CD4-positive, alpha-beta T cell (primary cell): ENCODE measurements at regions of chr18 and their contacts with region 1.

Region 1: GRCh38 chr18:8988261-8988871 is 114.1 kb upstream of the NDUFV2 start:
- DNase-seq: peak; percentile 35 to 78 (median 46)
- ATAC-seq: peak; percentile 70
- H3K4me3 ChIP-seq: no peak overlapping the region
- H3K4me3 Mint-ChIP-seq: no peak overlapping the region
- H3K27ac ChIP-seq: no peak overlapping the region
- H3K27ac Mint-ChIP-seq: no peak overlapping the region
- H3K4me1 ChIP-seq: no peaks in the 10 kb centered on the region
- H3K4me1 Mint-ChIP-seq: no peaks in the 10 kb centered on the region
- H3K27me3 ChIP-seq: no peaks in the 10 kb centered on the region
- H3K27me3 Mint-ChIP-seq: peaks cover 27% of the 10 kb centered on the region
- CTCF ChIP-seq: peak; percentile 84

Region 2: GRCh38 chr18:7403950-7404349 is 1584.4 kb before region 1 on chr18:
- CTCF ChIA-PET with region 1: no interaction called
- POLR2A ChIA-PET with region 1: no interaction called
- intact Hi-C with region 1: no loop called
- DNase-seq: no peak
- ATAC-seq: no peak
- H3K4me3 ChIP-seq: no peak overlapping the region
- H3K4me3 Mint-ChIP-seq: no peak overlapping the region
- H3K27ac ChIP-seq: no peak overlapping the region
- H3K27ac Mint-ChIP-seq: no peak overlapping the region
- H3K4me1 ChIP-seq: no peaks in the 10 kb centered on the region
- H3K4me1 Mint-ChIP-seq: no peaks in the 10 kb centered on the region
- H3K27me3 ChIP-seq: no peaks in the 10 kb centered on the region
- H3K27me3 Mint-ChIP-seq: no peaks in the 10 kb centered on the region
- CTCF ChIP-seq: no peak

Region 3: DNA sequence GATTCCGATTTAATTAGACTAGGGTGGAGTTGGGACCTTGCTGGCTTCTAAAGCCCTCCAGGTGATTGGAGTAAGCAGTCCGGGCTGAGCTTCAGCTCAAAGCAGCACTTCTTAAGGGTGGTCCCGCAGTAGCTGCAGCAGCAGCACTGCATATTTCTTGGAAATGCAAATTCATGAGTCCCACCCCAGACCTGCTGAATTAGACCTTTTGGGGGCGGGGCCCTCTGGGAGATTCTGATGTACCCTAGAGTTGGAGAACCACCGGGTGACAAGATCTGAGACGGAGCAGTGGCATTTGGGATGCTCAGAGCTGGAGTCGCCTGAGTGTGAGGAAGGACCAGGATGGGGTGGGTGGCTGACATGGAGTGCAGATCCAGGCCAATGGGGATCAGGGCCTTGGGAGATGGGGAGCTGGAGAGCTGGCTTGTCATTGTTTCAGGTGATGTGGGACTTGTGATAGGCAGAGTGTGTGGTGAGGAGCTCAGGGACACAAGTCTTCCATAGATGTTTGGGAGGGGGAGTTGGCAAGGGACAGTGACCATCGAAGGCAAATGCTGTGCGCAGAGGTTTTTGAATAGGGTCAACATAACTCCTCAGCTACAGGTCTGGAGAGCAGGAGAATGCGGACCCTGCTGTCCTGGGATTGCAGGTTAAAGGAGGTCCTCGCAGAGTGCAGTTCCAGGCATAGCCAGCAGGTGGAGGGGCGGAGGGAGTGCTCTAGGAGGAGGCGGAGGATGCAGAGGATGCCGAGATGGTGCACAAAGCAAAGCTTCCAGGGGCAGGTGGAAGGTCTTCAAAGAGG is 510.0 kb before region 1 on chr18:
- CTCF ChIA-PET with region 1: no interaction called
- POLR2A ChIA-PET with region 1: no interaction called
- intact Hi-C with region 1: loop called in 1 of 2 experiments (anchors 5 kb)
- DNase-seq: peak; percentile 11 to 60 (median 34)
- ATAC-seq: peak; percentile 43
- H3K4me3 ChIP-seq: no peak overlapping the region
- H3K4me3 Mint-ChIP-seq: no peak overlapping the region
- H3K27ac ChIP-seq: no peak overlapping the region
- H3K27ac Mint-ChIP-seq: no peak overlapping the region
- H3K4me1 ChIP-seq: no peaks in the 10 kb centered on the region
- H3K4me1 Mint-ChIP-seq: no peaks in the 10 kb centered on the region
- H3K27me3 ChIP-seq: peaks cover 0 to 3% of the 10 kb centered on the region in 2 experiments
- H3K27me3 Mint-ChIP-seq: peaks cover 16% of the 10 kb centered on the region
- CTCF ChIP-seq: peak; percentile 44

Region 4: GRCh38 chr18:8654503-8655451 is 333.6 kb before region 1 on chr18:
- CTCF ChIA-PET with region 1: interaction called, 11 read pairs
- POLR2A ChIA-PET with region 1: no interaction called
- intact Hi-C with region 1: loop called (anchors 1 kb)
- DNase-seq: peak in 3 of 14 experiments; percentile 33 to 43 (median 33)
- ATAC-seq: peak; percentile 51
- H3K4me3 ChIP-seq: no peak overlapping the region
- H3K4me3 Mint-ChIP-seq: no peak overlapping the region
- H3K27ac ChIP-seq: no peak overlapping the region
- H3K27ac Mint-ChIP-seq: no peak overlapping the region
- H3K4me1 ChIP-seq: no peaks in the 10 kb centered on the region
- H3K4me1 Mint-ChIP-seq: no peaks in the 10 kb centered on the region
- H3K27me3 ChIP-seq: no peaks in the 10 kb centered on the region
- H3K27me3 Mint-ChIP-seq: peaks cover 20% of the 10 kb centered on the region
- CTCF ChIP-seq: peak; percentile 94

Region 5: DNA sequence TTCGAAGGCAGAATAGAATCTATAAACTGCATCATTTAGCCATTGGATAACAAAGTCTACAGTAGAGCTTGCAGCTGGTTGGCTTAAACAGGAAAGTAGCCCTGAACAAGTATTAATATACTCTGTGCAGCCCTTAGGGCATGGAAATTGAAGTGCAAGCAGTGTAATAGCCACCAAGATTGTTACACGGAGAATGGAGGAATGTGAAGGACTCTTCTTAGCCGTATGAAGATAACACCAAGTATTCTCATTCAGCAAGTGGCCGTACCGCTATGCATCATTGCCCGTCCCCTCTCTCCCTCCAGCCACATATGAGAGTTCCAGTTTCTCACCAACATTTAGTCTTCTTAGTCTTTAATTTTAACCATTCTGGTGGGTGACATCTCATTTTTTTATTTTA is 188.7 kb after region 1 on chr18:
- CTCF ChIA-PET with region 1: no interaction called
- POLR2A ChIA-PET with region 1: no interaction called
- intact Hi-C with region 1: no loop called
- DNase-seq: no peak
- ATAC-seq: no peak
- H3K4me3 ChIP-seq: no peak overlapping the region
- H3K4me3 Mint-ChIP-seq: no peak overlapping the region
- H3K27ac ChIP-seq: no peak overlapping the region
- H3K27ac Mint-ChIP-seq: no peak overlapping the region
- H3K4me1 ChIP-seq: peaks cover 38% of the 10 kb centered on the region
- H3K4me1 Mint-ChIP-seq: peaks cover 86% of the 10 kb centered on the region
- H3K27me3 ChIP-seq: no peaks in the 10 kb centered on the region
- H3K27me3 Mint-ChIP-seq: no peaks in the 10 kb centered on the region
- CTCF ChIP-seq: no peak